ENCODE measurements at regions of chr12 and their contacts with region 1.

Region 1: GRCh38 chr12:17778242-17778641 is 311.8 kb downstream of the RERGL start:
- DNase-seq: no peak
- ATAC-seq: no peak
- H3K4me3 ChIP-seq: no peak overlapping the region
- H3K4me3 Mint-ChIP-seq: no peak overlapping the region
- H3K27ac ChIP-seq: no peak overlapping the region
- H3K27ac Mint-ChIP-seq: no peak overlapping the region
- H3K4me1 ChIP-seq: no peaks in the 10 kb centered on the region
- H3K4me1 Mint-ChIP-seq: no peaks in the 10 kb centered on the region
- H3K27me3 ChIP-seq: no peaks in the 10 kb centered on the region
- H3K27me3 Mint-ChIP-seq: no peaks in the 10 kb centered on the region
- CTCF ChIP-seq: no peak

Region 2: GRCh38 chr12:17802657-17803641 is 24.7 kb after region 1 on chr12:
- intact Hi-C with region 1: no loop called
- DNase-seq: no peak
- ATAC-seq: no peak
- H3K4me3 ChIP-seq: no peak overlapping the region
- H3K4me3 Mint-ChIP-seq: no peak overlapping the region
- H3K27ac ChIP-seq: no peak overlapping the region
- H3K27ac Mint-ChIP-seq: no peak overlapping the region
- H3K4me1 ChIP-seq: no peaks in the 10 kb centered on the region
- H3K4me1 Mint-ChIP-seq: no peaks in the 10 kb centered on the region
- H3K27me3 ChIP-seq: no peaks in the 10 kb centered on the region
- H3K27me3 Mint-ChIP-seq: no peaks in the 10 kb centered on the region
- CTCF ChIP-seq: no peak

Region 3: GRCh38 chr12:17866802-17867201 is 88.6 kb after region 1 on chr12:
- intact Hi-C with region 1: loop called (anchors 5 kb)
- DNase-seq: no peak
- ATAC-seq: no peak
- H3K4me3 ChIP-seq: no peak overlapping the region
- H3K4me3 Mint-ChIP-seq: no peak overlapping the region
- H3K27ac ChIP-seq: no peak overlapping the region
- H3K27ac Mint-ChIP-seq: no peak overlapping the region
- H3K4me1 ChIP-seq: no peaks in the 10 kb centered on the region
- H3K4me1 Mint-ChIP-seq: no peaks in the 10 kb centered on the region
- H3K27me3 ChIP-seq: no peaks in the 10 kb centered on the region
- H3K27me3 Mint-ChIP-seq: no peaks in the 10 kb centered on the region
- CTCF ChIP-seq: no peak

Measured in natural killer cell (primary cell).